Activated naive CD4-positive, alpha-beta T cell treated with anti-CD3 and anti-CD28 coated beads for 36 hours (primary cell): ENCODE measurements at regions of chr11 and their contacts with region 1.

Region 1: DNA sequence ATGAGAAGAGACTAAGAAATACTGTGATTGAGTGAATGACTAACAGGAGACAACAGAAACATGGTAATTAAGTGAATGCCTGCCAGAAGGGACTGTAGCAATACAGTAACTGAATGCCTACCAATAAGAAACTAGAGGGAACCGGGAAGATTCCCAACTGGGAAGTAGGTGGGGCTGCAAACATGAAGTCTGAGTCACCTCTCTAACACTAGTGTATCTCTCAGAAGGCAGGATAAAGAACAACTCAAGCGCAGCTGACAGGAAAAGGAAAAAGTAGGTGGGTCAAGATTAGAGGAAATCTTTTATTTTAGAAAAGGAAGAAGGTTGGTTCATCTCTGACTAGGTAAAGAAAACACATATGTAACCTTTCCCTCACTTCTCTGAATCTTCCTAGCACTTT is 14.0 kb downstream of the C11orf42 start:
- DNase-seq: no peak
- H3K4me3 Mint-ChIP-seq: no peak overlapping the region
- H3K27ac Mint-ChIP-seq: no peak overlapping the region
- H3K4me1 Mint-ChIP-seq: peaks cover 15% of the 10 kb centered on the region
- H3K27me3 Mint-ChIP-seq: no peaks in the 10 kb centered on the region

Region 2: GRCh38 chr11:4727171-4727570 is 1492.2 kb before region 1 on chr11:
- CTCF ChIA-PET with region 1: interaction called, 10 read pairs
- intact Hi-C with region 1: no loop called
- DNase-seq: no peak
- H3K4me3 Mint-ChIP-seq: no peak overlapping the region
- H3K27ac Mint-ChIP-seq: no peak overlapping the region
- H3K4me1 Mint-ChIP-seq: no peaks in the 10 kb centered on the region
- H3K27me3 Mint-ChIP-seq: peaks cover 6% of the 10 kb centered on the region

Region 3: DNA sequence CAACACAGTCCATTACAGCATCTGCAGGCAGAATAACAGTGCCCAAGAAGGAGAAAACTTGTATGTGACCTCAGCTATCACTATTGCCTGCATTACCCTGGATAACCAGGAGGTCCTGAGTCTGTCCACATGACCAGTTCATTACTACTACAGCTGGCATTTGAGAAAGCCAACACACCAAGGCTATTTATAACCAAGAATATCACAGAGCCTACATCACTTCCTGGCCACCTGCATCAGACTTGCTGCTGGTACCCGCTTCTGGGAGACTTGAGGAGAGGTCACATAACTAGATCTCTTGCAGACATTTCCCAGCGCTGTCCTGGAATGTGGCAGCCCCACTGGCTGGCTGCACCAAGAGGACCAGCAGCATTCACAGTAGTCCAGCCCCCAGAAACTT is 122.9 kb before region 1 on chr11:
- CTCF ChIA-PET with region 1: no interaction called
- intact Hi-C with region 1: no loop called
- DNase-seq: no peak
- H3K4me3 Mint-ChIP-seq: no peak overlapping the region
- H3K27ac Mint-ChIP-seq: no peak overlapping the region
- H3K4me1 Mint-ChIP-seq: peaks cover 6% of the 10 kb centered on the region
- H3K27me3 Mint-ChIP-seq: no peaks in the 10 kb centered on the region

Region 4: DNA sequence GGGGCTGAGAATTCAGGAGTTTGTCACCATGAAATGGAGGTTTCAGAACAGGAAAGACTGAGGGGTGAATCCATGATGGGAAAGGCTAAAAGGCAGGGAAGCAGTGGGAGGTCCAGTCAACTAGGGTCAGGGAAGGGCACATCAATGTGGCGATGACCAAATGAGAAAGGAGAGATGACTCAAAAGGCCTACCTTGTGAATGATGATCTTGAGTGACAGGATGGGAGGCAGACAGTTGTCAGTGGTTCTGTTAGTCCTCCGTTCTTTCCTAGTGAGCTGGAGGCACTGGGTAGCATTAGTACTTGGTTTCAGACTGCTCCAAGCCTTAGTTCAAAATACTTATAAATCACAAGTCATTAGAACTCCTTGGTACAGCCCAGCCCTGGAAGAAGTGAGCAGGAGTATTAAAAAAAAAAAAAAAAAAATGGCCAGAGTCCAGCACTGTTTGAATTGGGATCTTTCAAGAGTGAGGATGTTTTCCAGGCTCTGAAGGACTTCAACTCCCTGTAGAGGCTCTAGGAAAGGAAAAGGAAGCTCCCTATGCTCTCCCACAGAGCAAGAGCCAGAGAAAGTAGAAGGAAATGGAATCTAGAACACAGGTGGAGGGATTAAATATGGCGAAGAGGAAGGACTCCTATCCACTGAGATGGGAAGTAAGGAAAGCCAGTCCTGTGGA is 444.6 kb after region 1 on chr11:
- CTCF ChIA-PET with region 1: no interaction called
- intact Hi-C with region 1: no loop called
- DNase-seq: no peak
- H3K4me3 Mint-ChIP-seq: no peak overlapping the region
- H3K27ac Mint-ChIP-seq: no peak overlapping the region
- H3K4me1 Mint-ChIP-seq: peaks cover 31% of the 10 kb centered on the region
- H3K27me3 Mint-ChIP-seq: no peaks in the 10 kb centered on the region